Activated CD8-positive, alpha-beta T cell treated with anti-CD3 and anti-CD28 coated beads, Interleukin-2, amount 10 ng/mL, durations not matched to agents 7 days and 5 days (primary cell): ENCODE measurements at regions of chr1 and their contacts with region 1.

Region 1: GRCh38 chr1:183915625-183916510 is 110.9 kb downstream of the RGL1 start:
- DNase-seq: peak; percentile 82
- ATAC-seq: peak; percentile 97
- H3K4me3 Mint-ChIP-seq: no peak overlapping the region
- H3K27ac Mint-ChIP-seq: no peak overlapping the region
- H3K4me1 Mint-ChIP-seq: peaks cover 8% of the 10 kb centered on the region
- H3K27me3 Mint-ChIP-seq: no peaks in the 10 kb centered on the region

Region 2: DNA sequence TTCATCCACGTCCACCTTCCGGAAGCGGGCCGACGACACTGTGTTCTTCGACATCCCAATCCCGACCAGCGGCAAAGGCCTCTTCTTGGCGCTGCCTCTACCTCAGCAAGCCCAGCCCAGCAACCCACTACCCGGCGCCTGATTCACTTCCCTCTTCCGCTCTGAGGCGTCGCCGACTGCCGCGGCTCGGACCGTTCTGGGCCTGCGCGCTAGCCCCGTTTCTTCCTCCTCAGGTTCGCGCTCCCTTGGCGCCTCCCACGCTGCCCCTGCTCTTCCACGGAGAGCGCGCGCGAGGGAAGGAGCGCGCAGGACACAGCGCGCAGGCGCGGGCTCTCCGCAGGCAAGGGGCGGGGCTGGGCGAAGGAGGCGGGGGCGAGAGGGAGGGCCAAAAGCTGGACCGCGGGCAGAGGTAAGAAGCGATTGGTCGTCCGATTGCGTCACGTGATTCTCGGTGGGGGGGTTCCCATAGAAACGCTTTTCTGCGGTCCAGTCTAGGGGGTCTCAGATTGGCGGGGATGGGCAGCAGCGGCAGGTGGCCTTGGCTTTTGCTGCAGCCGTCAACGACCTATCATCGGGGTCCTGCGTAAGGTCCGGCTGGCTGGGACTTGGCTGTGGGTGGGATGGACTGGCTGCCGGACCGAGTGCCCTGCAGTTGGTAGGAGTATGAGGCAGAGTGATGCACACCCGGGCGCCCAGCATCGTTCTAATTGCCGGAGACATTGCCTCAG is 280.1 kb before region 1 on chr1 and contains the start of gene ARPC5:
- CTCF ChIA-PET with region 1: interaction called, 34 read pairs
- POLR2A ChIA-PET with region 1: no interaction called
- DNase-seq: peak; percentile 96
- ATAC-seq: peak; percentile 94
- H3K4me3 Mint-ChIP-seq: peak within 1 kb of the TSS; percentile 100
- H3K27ac Mint-ChIP-seq: peak within 1 kb of the TSS; percentile 99
- H3K4me1 Mint-ChIP-seq: peaks cover 31% of the 10 kb centered on the region
- H3K27me3 Mint-ChIP-seq: peaks cover 11% of the 10 kb centered on the region
- total RNA-seq, gene ARPC5: 271 to 274 TPM

Region 3: DNA sequence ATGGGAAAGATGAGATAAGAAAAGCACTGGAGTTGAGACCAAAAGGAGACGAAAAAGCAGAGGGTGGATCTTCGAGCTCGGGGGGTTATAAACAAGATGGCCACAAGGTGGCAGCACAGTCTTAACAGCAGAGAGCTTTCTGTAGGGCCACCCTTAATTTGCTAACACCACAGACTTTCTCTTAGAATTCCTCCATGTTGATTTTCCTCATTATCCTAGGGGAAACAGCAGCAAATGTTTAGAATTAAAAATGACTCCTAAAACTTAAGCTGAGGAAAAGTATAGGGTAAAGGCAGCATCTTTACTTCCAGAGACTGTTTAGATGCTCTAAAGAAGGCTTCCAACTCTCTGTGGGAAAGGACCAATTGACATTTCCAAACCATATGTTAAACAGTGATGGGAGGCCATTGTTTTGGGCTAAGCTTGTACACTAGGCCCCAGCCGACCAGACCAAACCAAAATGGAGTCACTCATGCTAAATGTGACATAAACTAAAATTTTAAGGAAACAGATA is 260.2 kb before region 1 on chr1:
- CTCF ChIA-PET with region 1: interaction called, 188 read pairs
- POLR2A ChIA-PET with region 1: interaction called, 6 read pairs
- DNase-seq: peak; percentile 82
- ATAC-seq: peak; percentile 70
- H3K4me3 Mint-ChIP-seq: no peak overlapping the region
- H3K27ac Mint-ChIP-seq: no peak overlapping the region
- H3K4me1 Mint-ChIP-seq: peaks cover 39% of the 10 kb centered on the region
- H3K27me3 Mint-ChIP-seq: peaks cover 4% of the 10 kb centered on the region

Region 4: DNA sequence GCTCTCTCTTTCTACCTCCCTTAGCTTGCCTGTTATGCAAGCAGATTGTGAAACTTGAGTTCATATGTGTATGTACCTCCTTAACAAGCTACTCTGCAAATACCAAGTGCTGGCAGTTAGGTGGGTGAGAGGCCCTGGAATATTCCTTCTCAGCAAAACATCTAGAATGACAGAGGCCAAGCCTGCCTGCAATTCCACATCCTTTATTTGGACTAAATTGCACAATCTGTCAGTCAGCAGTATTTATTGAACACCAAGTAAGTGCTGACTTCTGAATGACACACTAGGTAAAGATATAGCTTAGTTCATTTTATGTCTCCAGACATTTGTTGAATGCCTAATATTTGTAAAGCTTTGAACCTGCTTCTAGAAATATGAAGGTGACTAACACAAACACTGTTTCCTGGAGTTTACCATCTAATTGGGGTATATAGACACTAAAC is 23.5 kb before region 1 on chr1:
- CTCF ChIA-PET with region 1: interaction called, 18 read pairs
- POLR2A ChIA-PET with region 1: no interaction called
- DNase-seq: no peak
- ATAC-seq: no peak
- H3K4me3 Mint-ChIP-seq: no peak overlapping the region
- H3K27ac Mint-ChIP-seq: no peak overlapping the region
- H3K4me1 Mint-ChIP-seq: peaks cover 31% of the 10 kb centered on the region
- H3K27me3 Mint-ChIP-seq: no peaks in the 10 kb centered on the region

Region 5: DNA sequence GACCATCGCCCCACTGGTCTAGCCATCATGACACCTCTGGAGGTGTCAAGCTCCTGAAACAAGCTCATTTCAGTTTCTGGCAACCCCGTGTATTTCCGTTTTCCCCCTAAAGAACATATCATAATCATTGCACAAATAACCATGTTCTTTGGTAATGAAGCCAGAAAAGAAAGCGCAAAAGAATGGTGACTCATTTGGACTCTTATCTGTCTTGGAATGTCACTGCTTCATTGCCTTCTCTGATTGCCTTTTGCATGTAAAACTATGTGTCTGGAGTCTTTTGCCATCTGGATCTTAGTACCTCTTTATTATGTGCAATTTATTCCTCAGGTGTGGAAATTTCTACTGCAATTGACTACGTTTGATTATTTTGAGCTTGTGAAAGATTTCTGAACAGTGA is 11.1 kb after region 1 on chr1:
- CTCF ChIA-PET with region 1: interaction called, 22 read pairs
- POLR2A ChIA-PET with region 1: no interaction called
- DNase-seq: no peak
- ATAC-seq: no peak
- H3K4me3 Mint-ChIP-seq: no peak overlapping the region
- H3K27ac Mint-ChIP-seq: no peak overlapping the region
- H3K4me1 Mint-ChIP-seq: no peaks in the 10 kb centered on the region
- H3K27me3 Mint-ChIP-seq: no peaks in the 10 kb centered on the region